ENCODE measurements at regions of chr7 and their contacts with region 1.

Region 1: GRCh38 chr7:55140221-55140940 is 121.6 kb downstream of the EGFR start:
- DNase-seq: no peak
- H3K4me3 ChIP-seq: no peak overlapping the region
- H3K27ac ChIP-seq: 0 out of 4 replicates have a peak overlapping the region, but pooled peaks of 1 of the 2 experiments have one; percentile 16
- H3K4me1 ChIP-seq: peaks cover 0 to 7% of the 10 kb centered on the region in 2 experiments; a peak in 1 of 4 replicates
- H3K27me3 ChIP-seq: no peaks in the 10 kb centered on the region
- CTCF ChIP-seq: no peak
- EP300 ChIP-seq: no peak
- RAD21 ChIP-seq: no peak

Region 2: DNA sequence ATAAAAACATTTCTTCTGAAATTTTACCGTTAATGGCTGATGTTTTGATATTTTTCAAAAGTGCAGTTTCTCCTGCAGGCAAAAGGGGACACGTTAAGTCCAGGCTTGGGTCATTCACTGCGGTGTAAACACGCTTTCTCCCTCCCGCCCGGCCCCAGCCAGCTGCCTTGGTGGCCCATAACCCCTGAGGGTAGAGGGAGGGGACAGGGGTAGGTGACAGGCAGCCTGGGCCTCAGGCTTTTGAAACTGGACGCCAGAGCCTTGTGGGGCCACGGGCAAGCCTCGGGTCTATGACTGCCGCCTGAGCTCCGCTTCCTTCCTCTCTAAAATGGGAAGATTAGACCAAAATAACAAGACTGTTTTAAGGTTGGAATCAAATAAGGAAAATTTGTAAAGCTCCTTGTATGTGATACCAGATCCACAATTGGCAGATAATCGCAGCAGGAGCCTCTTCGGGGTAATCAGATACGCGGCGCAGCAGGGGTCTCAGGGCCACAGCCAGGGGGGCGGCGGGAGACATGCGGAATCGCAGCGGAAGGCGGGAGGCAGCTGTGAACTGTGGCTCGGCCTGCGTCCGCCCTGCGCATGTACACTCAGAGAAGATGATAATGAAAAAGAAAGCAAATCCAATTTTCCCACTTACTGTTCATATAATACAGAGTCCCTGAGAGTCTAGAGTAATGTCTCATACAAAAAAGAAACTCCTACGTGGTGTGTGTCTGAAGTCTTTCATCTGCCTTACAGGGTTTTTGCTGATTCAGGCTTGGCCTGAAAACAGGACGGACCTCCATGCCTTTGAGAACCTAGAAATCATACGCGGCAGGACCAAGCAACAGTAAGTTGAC is 16.8 kb after region 1 on chr7:
- CTCF ChIA-PET with region 1: interaction called, 29 read pairs
- POLR2A ChIA-PET with region 1: no interaction called
- DNase-seq: peak; percentile 62
- H3K4me3 ChIP-seq: no peak overlapping the region
- H3K27ac ChIP-seq: no peak overlapping the region
- H3K4me1 ChIP-seq: peaks cover 6 to 7% of the 10 kb centered on the region in 2 experiments; a peak in 1 of 4 replicates
- H3K27me3 ChIP-seq: no peaks in the 10 kb centered on the region
- CTCF ChIP-seq: no peak
- EP300 ChIP-seq: no peak
- RAD21 ChIP-seq: no peak

Region 3: DNA sequence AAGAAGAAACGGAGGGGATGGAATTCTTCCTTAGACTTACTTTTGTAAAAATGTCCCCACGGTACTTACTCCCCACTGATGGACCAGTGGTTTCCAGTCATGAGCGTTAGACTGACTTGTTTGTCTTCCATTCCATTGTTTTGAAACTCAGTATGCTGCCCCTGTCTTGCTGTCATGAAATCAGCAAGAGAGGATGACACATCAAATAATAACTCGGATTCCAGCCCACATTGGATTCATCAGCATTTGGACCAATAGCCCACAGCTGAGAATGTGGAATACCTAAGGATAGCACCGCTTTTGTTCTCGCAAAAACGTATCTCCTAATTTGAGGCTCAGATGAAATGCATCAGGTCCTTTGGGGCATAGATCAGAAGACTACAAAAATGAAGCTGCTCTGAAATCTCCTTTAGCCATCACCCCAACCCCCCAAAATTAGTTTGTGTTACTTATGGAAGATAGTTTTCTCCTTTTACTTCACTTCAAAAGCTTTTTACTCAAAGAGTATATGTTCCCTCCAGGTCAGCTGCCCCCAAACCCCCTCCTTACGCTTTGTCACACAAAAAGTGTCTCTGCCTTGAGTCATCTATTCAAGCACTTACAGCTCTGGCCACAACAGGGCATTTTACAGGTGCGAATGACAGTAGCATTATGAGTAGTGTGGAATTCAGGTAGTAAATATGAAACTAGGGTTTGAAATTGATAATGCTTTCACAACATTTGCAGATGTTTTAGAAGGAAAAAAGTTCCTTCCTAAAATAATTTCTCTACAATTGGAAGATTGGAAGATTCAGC is 66.1 kb after region 1 on chr7:
- CTCF ChIA-PET with region 1: no interaction called
- POLR2A ChIA-PET with region 1: no interaction called
- DNase-seq: no peak
- H3K4me3 ChIP-seq: no peak overlapping the region
- H3K27ac ChIP-seq: no peak overlapping the region
- H3K4me1 ChIP-seq: peaks cover 2 to 8% of the 10 kb centered on the region in 2 experiments; a peak in 2 of 4 replicates
- H3K27me3 ChIP-seq: no peaks in the 10 kb centered on the region
- CTCF ChIP-seq: no peak
- EP300 ChIP-seq: no peak
- RAD21 ChIP-seq: no peak